ENCODE measurements at regions of chr9 and their contacts with region 1.

Region 1: GRCh38 chr9:77903666-77904285 is 127.8 kb downstream of the GNAQ start:
- DNase-seq: no peak
- ATAC-seq: no peak
- H3K4me3 ChIP-seq: no peak overlapping the region
- H3K27ac ChIP-seq: no peak overlapping the region
- H3K4me1 ChIP-seq: peaks cover 11% of the 10 kb centered on the region
- H3K27me3 ChIP-seq: no peaks in the 10 kb centered on the region
- CTCF ChIP-seq: no peak
- POLR2A ChIP-seq: no peak
- RAD21 ChIP-seq: no peak

Region 2: GRCh38 chr9:77939149-77939668 is 35.4 kb after region 1 on chr9:
- CTCF ChIA-PET with region 1: no interaction called
- POLR2A ChIA-PET with region 1: no interaction called
- dilution Hi-C with region 1: no loop called
- in situ Hi-C with region 1: no loop called
- intact Hi-C with region 1: loop called (anchors 2 kb)
- DNase-seq: peak; percentile 60
- ATAC-seq: peak; percentile 14; the same call in 1 of the 2 replicates
- H3K4me3 ChIP-seq: no peak overlapping the region
- H3K27ac ChIP-seq: no peak overlapping the region
- H3K4me1 ChIP-seq: no peaks in the 10 kb centered on the region; the same call in none of the 2 replicates
- H3K27me3 ChIP-seq: no peaks in the 10 kb centered on the region
- CTCF ChIP-seq: no peak
- POLR2A ChIP-seq: no peak
- RAD21 ChIP-seq: no peak